CD8-positive, alpha-beta T cell (primary cell): ENCODE measurements at regions of chr13 and their contacts with region 1.

Region 1: GRCh38 chr13:78137404-78138142 is 218.9 kb upstream of the EDNRB start:
- DNase-seq: peak in 2 of 9 experiments; percentile 50 to 56
- ATAC-seq: no peak
- H3K4me3 ChIP-seq: no peak overlapping the region
- H3K4me3 Mint-ChIP-seq: peak overlapping the region; percentile 60
- H3K27ac ChIP-seq: no peak overlapping the region
- H3K27ac Mint-ChIP-seq: no peak overlapping the region
- H3K4me1 ChIP-seq: no peaks in the 10 kb centered on the region
- H3K4me1 Mint-ChIP-seq: peaks cover 5% of the 10 kb centered on the region
- H3K27me3 ChIP-seq: peaks cover 0 to 3% of the 10 kb centered on the region in 2 experiments
- H3K27me3 Mint-ChIP-seq: peaks cover under 1% of the 10 kb centered on the region
- CTCF ChIP-seq: peak; percentile 55

Region 2: GRCh38 chr13:78147905-78148304 is 10.3 kb after region 1 on chr13:
- CTCF ChIA-PET with region 1: interaction called, 18 read pairs
- POLR2A ChIA-PET with region 1: interaction called, 3 read pairs
- intact Hi-C with region 1: no loop called
- DNase-seq: no peak
- ATAC-seq: no peak
- H3K4me3 ChIP-seq: no peak overlapping the region
- H3K4me3 Mint-ChIP-seq: no peak overlapping the region
- H3K27ac ChIP-seq: no peak overlapping the region
- H3K27ac Mint-ChIP-seq: no peak overlapping the region
- H3K4me1 ChIP-seq: no peaks in the 10 kb centered on the region
- H3K4me1 Mint-ChIP-seq: no peaks in the 10 kb centered on the region
- H3K27me3 ChIP-seq: no peaks in the 10 kb centered on the region
- H3K27me3 Mint-ChIP-seq: peaks cover 4% of the 10 kb centered on the region
- CTCF ChIP-seq: no peak

Region 3: DNA sequence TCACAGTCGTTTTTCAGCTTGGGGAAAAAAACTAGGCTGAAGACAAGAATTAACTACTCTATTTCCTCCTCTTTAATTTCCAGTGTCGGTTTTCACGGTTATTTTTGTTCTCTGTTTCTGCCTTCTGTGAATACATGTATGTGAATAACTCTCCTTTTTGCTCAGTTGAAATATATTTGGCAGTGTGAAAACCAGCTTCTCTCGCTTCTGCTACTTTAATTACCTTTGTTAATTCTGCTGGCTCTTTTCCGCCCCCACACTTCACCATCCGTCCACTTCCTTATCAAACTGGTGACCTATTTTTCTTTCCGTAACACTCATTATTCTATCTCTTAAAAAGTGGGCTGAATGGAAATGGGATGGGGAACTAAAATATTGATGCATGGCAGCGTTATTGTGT is 339.3 kb after region 1 on chr13:
- CTCF ChIA-PET with region 1: no interaction called
- POLR2A ChIA-PET with region 1: no interaction called
- intact Hi-C with region 1: no loop called
- DNase-seq: no peak
- ATAC-seq: no peak
- H3K4me3 ChIP-seq: no peak overlapping the region
- H3K4me3 Mint-ChIP-seq: no peak overlapping the region
- H3K27ac ChIP-seq: no peak overlapping the region
- H3K27ac Mint-ChIP-seq: no peak overlapping the region
- H3K4me1 ChIP-seq: no peaks in the 10 kb centered on the region
- H3K4me1 Mint-ChIP-seq: no peaks in the 10 kb centered on the region
- H3K27me3 ChIP-seq: no peaks in the 10 kb centered on the region
- H3K27me3 Mint-ChIP-seq: peaks cover 3% of the 10 kb centered on the region
- CTCF ChIP-seq: no peak

Region 4: DNA sequence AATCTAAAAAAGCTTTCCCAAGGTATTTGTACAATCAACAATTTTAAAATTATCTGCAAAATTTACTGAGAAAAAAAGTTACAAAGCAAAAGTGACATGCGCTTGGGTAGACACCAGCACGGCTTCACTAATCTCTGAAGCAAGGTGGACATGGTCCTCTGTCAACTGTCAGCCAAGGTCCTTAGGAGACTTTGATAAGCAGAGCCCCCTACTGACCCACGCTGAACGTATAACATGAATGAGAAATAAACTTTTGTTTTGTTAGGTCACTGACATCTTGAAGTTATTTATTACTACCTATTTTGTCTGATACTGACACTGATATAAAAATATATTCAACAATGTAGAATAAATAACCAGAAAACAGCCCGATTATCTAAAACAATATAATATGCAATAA is 622.1 kb after region 1 on chr13:
- CTCF ChIA-PET with region 1: no interaction called
- POLR2A ChIA-PET with region 1: no interaction called
- intact Hi-C with region 1: loop called (anchors 2 to 10 kb)
- DNase-seq: no peak
- ATAC-seq: no peak
- H3K4me3 ChIP-seq: no peak overlapping the region
- H3K4me3 Mint-ChIP-seq: no peak overlapping the region
- H3K27ac ChIP-seq: no peak overlapping the region
- H3K27ac Mint-ChIP-seq: no peak overlapping the region
- H3K4me1 ChIP-seq: no peaks in the 10 kb centered on the region
- H3K4me1 Mint-ChIP-seq: no peaks in the 10 kb centered on the region
- H3K27me3 ChIP-seq: peaks cover 0 to 2% of the 10 kb centered on the region in 2 experiments
- H3K27me3 Mint-ChIP-seq: peaks cover 8% of the 10 kb centered on the region
- CTCF ChIP-seq: no peak

Region 5: DNA sequence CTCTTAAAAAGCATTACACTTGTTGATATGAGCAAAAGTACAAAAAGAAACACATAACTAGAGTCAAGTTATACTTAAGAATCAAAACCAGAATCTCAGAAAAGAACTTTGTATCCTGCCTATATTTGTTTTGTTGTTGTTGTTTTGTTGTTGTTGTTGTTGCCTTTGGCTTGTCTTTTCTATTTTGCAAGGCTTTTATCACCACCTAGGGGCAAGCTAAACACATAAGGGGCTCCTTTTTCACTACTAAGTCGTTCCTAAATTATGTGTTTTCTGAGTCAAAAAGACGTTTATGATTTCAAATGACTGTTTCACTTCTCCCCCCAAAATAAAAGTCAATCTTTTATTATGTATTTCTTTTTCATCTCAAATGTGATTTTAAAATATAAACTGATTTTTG is 1018.3 kb after region 1 on chr13:
- CTCF ChIA-PET with region 1: no interaction called
- POLR2A ChIA-PET with region 1: no interaction called
- intact Hi-C with region 1: no loop called
- DNase-seq: no peak
- ATAC-seq: no peak
- H3K4me3 ChIP-seq: no peak overlapping the region
- H3K4me3 Mint-ChIP-seq: no peak overlapping the region
- H3K27ac ChIP-seq: no peak overlapping the region
- H3K27ac Mint-ChIP-seq: no peak overlapping the region
- H3K4me1 ChIP-seq: no peaks in the 10 kb centered on the region
- H3K4me1 Mint-ChIP-seq: no peaks in the 10 kb centered on the region
- H3K27me3 ChIP-seq: no peaks in the 10 kb centered on the region
- H3K27me3 Mint-ChIP-seq: peaks cover 16% of the 10 kb centered on the region
- CTCF ChIP-seq: no peak

Region 6: GRCh38 chr13:79336966-79337365 is 1199.4 kb after region 1 on chr13:
- CTCF ChIA-PET with region 1: no interaction called
- POLR2A ChIA-PET with region 1: no interaction called
- intact Hi-C with region 1: loop called in 1 of 2 experiments (anchors 5 kb)
- DNase-seq: no peak
- ATAC-seq: no peak
- H3K4me3 ChIP-seq: no peak overlapping the region
- H3K4me3 Mint-ChIP-seq: no peak overlapping the region
- H3K27ac ChIP-seq: no peak overlapping the region
- H3K27ac Mint-ChIP-seq: peak overlapping the region; percentile 69
- H3K4me1 ChIP-seq: no peaks in the 10 kb centered on the region
- H3K4me1 Mint-ChIP-seq: peaks cover 2% of the 10 kb centered on the region
- H3K27me3 ChIP-seq: no peaks in the 10 kb centered on the region
- H3K27me3 Mint-ChIP-seq: no peaks in the 10 kb centered on the region
- CTCF ChIP-seq: no peak

Region 7: DNA sequence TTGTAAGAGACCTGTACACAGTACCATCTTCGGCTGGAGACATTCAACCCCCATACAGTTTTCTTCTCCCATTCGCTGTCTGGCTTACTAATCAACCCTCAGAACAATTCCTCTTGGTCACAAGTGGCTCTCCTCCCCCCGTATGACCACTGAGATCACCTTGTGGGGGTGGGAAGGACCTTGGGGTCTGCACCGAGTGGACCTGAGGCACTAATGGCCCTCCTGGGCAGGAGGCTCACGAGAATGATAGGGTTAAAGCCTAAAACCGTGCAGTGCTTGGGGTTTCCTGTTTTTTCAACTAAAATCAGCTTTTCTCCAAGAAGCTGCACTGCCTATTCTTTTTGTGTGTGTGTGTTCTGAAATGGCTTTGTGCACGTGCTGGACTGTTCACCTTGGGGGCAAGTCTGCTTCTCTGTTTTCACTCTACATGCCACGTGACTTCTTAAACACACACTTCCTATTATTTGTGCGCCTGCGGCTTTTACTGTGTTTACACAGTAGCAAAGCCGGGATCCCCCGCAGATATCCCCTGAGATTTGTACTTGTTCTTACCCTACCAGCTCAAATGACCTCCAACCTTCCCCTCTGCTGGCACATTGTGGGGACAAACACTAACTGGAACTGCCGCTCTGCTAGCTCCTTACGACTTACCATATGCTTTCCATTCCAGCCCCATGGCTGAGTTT is 1256.1 kb after region 1 on chr13:
- CTCF ChIA-PET with region 1: no interaction called
- POLR2A ChIA-PET with region 1: no interaction called
- intact Hi-C with region 1: loop called in 1 of 2 experiments (anchors 10 kb)
- DNase-seq: peak in 8 of 9 experiments; percentile 21 to 83 (median 60)
- ATAC-seq: peak; percentile 66
- H3K4me3 ChIP-seq: peak overlapping the region; percentile 15 to 59
- H3K4me3 Mint-ChIP-seq: peak overlapping the region; percentile 84
- H3K27ac ChIP-seq: peak overlapping the region; percentile 42 to 49
- H3K27ac Mint-ChIP-seq: peak overlapping the region; percentile 95
- H3K4me1 ChIP-seq: peaks cover 58% of the 10 kb centered on the region
- H3K4me1 Mint-ChIP-seq: peaks cover 69% of the 10 kb centered on the region
- H3K27me3 ChIP-seq: no peaks in the 10 kb centered on the region
- H3K27me3 Mint-ChIP-seq: no peaks in the 10 kb centered on the region
- CTCF ChIP-seq: no peak

Region 8: DNA sequence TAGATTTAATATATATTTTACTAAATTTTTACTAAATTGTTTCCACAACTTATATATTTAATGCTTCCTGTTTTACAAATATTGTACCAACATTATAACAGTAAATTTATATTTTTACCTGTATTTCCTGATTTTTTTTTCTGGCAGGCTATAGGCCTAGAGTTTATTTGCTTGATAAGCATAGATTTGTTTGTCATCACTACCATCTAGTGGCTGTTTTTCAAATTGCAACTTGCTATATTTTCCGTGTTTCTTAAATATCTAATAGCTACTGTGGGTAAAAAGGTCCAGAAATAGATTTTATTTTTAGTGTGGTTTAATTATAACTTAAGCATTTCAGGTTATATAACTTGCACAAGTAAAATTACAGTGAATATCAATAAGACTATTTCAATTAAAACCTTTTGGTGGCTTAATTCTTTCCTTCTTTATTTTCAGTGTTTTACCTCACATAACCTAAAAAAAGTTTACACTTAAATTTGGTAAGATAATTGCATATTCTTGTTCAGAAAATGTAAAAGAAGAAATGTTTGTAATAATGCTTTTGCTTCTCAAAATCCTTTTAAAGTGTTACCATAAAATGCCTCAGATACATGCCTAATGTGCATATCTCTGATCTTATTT is 1404.0 kb after region 1 on chr13:
- CTCF ChIA-PET with region 1: interaction called, 5 read pairs
- POLR2A ChIA-PET with region 1: no interaction called
- intact Hi-C with region 1: loop called in 1 of 2 experiments (anchors 2 kb)
- DNase-seq: peak in 3 of 9 experiments; percentile 13 to 80 (median 75)
- ATAC-seq: peak; percentile 71
- H3K4me3 ChIP-seq: no peak overlapping the region
- H3K4me3 Mint-ChIP-seq: no peak overlapping the region
- H3K27ac ChIP-seq: no peak overlapping the region
- H3K27ac Mint-ChIP-seq: no peak overlapping the region
- H3K4me1 ChIP-seq: no peaks in the 10 kb centered on the region
- H3K4me1 Mint-ChIP-seq: no peaks in the 10 kb centered on the region
- H3K27me3 ChIP-seq: no peaks in the 10 kb centered on the region
- H3K27me3 Mint-ChIP-seq: no peaks in the 10 kb centered on the region
- CTCF ChIP-seq: peak; percentile 95